IMR-90 (cell line): ENCODE measurements at regions of chr7 and their contacts with region 1.

Region 1: GRCh38 chr7:27316311-27316710 is 73.7 kb downstream of the EVX1 start:
- DNase-seq: no peak
- ATAC-seq: no peak
- H3K4me3 ChIP-seq: no peak overlapping the region
- H3K27ac ChIP-seq: no peak overlapping the region
- H3K4me1 ChIP-seq: no peaks in the 10 kb centered on the region
- H3K27me3 ChIP-seq: peaks cover 7% of the 10 kb centered on the region
- CTCF ChIP-seq: no peak
- POLR2A ChIP-seq: no peak
- RAD21 ChIP-seq: no peak

Region 2: GRCh38 chr7:27053153-27053552 is 263.2 kb before region 1 on chr7:
- CTCF ChIA-PET with region 1: no interaction called
- POLR2A ChIA-PET with region 1: no interaction called
- dilution Hi-C with region 1: no loop called
- in situ Hi-C with region 1: no loop called
- intact Hi-C with region 1: no loop called
- DNase-seq: no peak
- ATAC-seq: no peak
- H3K4me3 ChIP-seq: no peak overlapping the region
- H3K27ac ChIP-seq: no peak overlapping the region
- H3K4me1 ChIP-seq: no peaks in the 10 kb centered on the region
- H3K27me3 ChIP-seq: no peaks in the 10 kb centered on the region
- CTCF ChIP-seq: no peak
- POLR2A ChIP-seq: no peak
- RAD21 ChIP-seq: no peak

Region 3: GRCh38 chr7:27269455-27269854 is 46.9 kb before region 1 on chr7:
- CTCF ChIA-PET with region 1: interaction called, 10 read pairs
- POLR2A ChIA-PET with region 1: no interaction called
- dilution Hi-C with region 1: no loop called
- in situ Hi-C with region 1: no loop called
- intact Hi-C with region 1: no loop called
- DNase-seq: no peak
- ATAC-seq: no peak
- H3K4me3 ChIP-seq: no peak overlapping the region
- H3K27ac ChIP-seq: no peak overlapping the region
- H3K4me1 ChIP-seq: no peaks in the 10 kb centered on the region
- H3K27me3 ChIP-seq: peaks cover 2% of the 10 kb centered on the region; the same call in 1 of the 2 replicates
- CTCF ChIP-seq: no peak
- POLR2A ChIP-seq: no peak
- RAD21 ChIP-seq: no peak